ENCODE measurements at regions of chr2 and their contacts with region 1.

Region 1: GRCh38 chr2:75466708-75467311 is 93.9 kb downstream of the EVA1A start:
- DNase-seq: peak; percentile 10 to 80
- H3K4me3 ChIP-seq: no peak overlapping the region
- H3K27ac ChIP-seq: no peak overlapping the region
- H3K4me1 ChIP-seq: peaks cover 0 to 3% (median 0%) of the 10 kb centered on the region in 4 experiments; a peak in 2 of 7 replicates
- H3K27me3 ChIP-seq: no peaks in the 10 kb centered on the region
- CTCF ChIP-seq: peak; percentile 44 to 71 (median 65)
- EP300 ChIP-seq: no peak
- POLR2A ChIP-seq: no peak
- RAD21 ChIP-seq: peak; percentile 61 to 67

Region 2: GRCh38 chr2:75432761-75433361 is 33.9 kb before region 1 on chr2:
- CTCF ChIA-PET with region 1: interaction called, 11 read pairs
- POLR2A ChIA-PET with region 1: no interaction called
- DNase-seq: no peak
- H3K4me3 ChIP-seq: no peak overlapping the region
- H3K27ac ChIP-seq: no peak overlapping the region
- H3K4me1 ChIP-seq: peaks cover 4 to 20% (median 6%) of the 10 kb centered on the region in 4 experiments; a peak in 5 of 7 replicates
- H3K27me3 ChIP-seq: no peaks in the 10 kb centered on the region
- CTCF ChIP-seq: no peak
- EP300 ChIP-seq: no peak
- POLR2A ChIP-seq: no peak
- RAD21 ChIP-seq: no peak

Region 3: GRCh38 chr2:75515584-75516368 is 49.0 kb after region 1 on chr2:
- CTCF ChIA-PET with region 1: no interaction called
- POLR2A ChIA-PET with region 1: no interaction called
- DNase-seq: no peak
- H3K4me3 ChIP-seq: no peak overlapping the region
- H3K27ac ChIP-seq: no peak overlapping the region
- H3K4me1 ChIP-seq: no peaks in the 10 kb centered on the region
- H3K27me3 ChIP-seq: no peaks in the 10 kb centered on the region
- CTCF ChIP-seq: no peak
- EP300 ChIP-seq: no peak
- POLR2A ChIP-seq: no peak
- RAD21 ChIP-seq: no peak

Region 4: DNA sequence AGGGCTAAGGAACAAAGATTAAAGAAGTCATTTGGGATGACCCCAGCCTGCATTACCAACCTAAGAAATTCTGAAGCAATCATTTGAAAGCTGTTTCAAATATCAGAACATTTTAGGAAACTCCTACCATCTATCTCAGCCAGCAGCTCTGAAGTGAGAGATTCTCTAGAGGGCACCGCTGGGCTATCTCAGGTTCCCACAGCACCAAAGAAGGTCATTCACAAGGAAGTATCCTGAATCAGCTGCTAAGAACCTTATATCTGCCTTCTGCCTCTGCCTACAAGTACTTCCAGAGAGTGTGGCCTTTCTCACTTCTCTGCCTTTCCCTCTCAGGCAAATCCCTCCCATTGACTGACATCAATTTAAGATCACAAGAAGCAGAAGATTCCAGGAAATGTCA is 107.3 kb after region 1 on chr2:
- CTCF ChIA-PET with region 1: interaction called, 11 read pairs
- POLR2A ChIA-PET with region 1: no interaction called
- DNase-seq: no peak
- H3K4me3 ChIP-seq: no peak overlapping the region
- H3K27ac ChIP-seq: no peak overlapping the region
- H3K4me1 ChIP-seq: no peaks in the 10 kb centered on the region
- H3K27me3 ChIP-seq: no peaks in the 10 kb centered on the region; a peak in 2 of 7 replicates
- CTCF ChIP-seq: peak in 1 of 3 experiments; percentile 2; a peak in 1 of 4 replicates
- EP300 ChIP-seq: no peak
- POLR2A ChIP-seq: no peak
- RAD21 ChIP-seq: peak; percentile 22 to 30; a peak in 2 of 4 replicates

Region 5: GRCh38 chr2:75614056-75614710 is 147.4 kb after region 1 on chr2:
- CTCF ChIA-PET with region 1: interaction called, 117 read pairs
- POLR2A ChIA-PET with region 1: no interaction called
- DNase-seq: no peak
- H3K4me3 ChIP-seq: no peak overlapping the region
- H3K27ac ChIP-seq: no peak overlapping the region
- H3K4me1 ChIP-seq: no peaks in the 10 kb centered on the region
- H3K27me3 ChIP-seq: no peaks in the 10 kb centered on the region
- CTCF ChIP-seq: no peak
- EP300 ChIP-seq: no peak
- POLR2A ChIP-seq: no peak
- RAD21 ChIP-seq: no peak

Region 6: DNA sequence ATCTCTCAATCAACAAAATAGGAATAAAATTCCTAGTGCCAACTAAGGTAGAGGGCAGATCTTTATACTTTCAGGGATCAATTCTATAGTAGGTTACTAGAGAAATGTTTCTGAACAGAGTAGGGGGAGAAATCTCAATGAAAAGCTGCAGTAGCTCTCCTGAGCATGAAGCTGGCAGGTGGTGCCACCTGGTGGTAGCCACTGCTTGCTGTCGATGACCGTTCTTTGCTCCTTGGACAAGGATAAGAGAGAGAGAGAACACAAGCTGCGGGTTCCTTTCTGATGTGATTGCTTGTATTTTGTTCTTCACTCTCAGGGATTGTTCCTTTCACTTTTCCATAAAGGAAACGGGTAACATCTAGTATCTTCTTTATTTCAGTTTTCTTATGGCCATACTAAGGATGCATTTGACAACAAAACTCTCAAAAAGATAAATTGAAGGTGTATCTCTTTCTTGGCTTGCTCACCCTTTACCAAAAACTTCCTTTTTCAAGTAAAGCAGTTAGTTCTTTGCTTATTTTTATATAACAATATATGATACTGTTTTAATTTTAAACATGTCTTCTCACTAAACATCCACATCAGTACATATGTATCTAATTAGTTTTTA is 161.2 kb after region 1 on chr2:
- CTCF ChIA-PET with region 1: interaction called, 65 read pairs
- POLR2A ChIA-PET with region 1: no interaction called
- DNase-seq: peak in 1 of 2 experiments; percentile 85
- H3K4me3 ChIP-seq: no peak overlapping the region
- H3K27ac ChIP-seq: no peak overlapping the region
- H3K4me1 ChIP-seq: no peaks in the 10 kb centered on the region
- H3K27me3 ChIP-seq: no peaks in the 10 kb centered on the region
- CTCF ChIP-seq: peak; percentile 90 to 93 (median 90)
- EP300 ChIP-seq: no peak
- POLR2A ChIP-seq: no peak
- RAD21 ChIP-seq: peak; percentile 88 to 89

Measured in H1 (cell line).